PC-9 (cell line): ENCODE measurements at regions of chr7 and their contacts with region 1.

Region 1: GRCh38 chr7:36291387-36292316 is 98.0 kb upstream of the ANLN start:
- DNase-seq: peak; percentile 70 to 80
- H3K4me3 ChIP-seq: no peak overlapping the region
- H3K27ac ChIP-seq: no peak overlapping the region
- H3K4me1 ChIP-seq: peaks cover 56% of the 10 kb centered on the region
- H3K27me3 ChIP-seq: no peaks in the 10 kb centered on the region
- CTCF ChIP-seq: peak; percentile 100

Region 2: DNA sequence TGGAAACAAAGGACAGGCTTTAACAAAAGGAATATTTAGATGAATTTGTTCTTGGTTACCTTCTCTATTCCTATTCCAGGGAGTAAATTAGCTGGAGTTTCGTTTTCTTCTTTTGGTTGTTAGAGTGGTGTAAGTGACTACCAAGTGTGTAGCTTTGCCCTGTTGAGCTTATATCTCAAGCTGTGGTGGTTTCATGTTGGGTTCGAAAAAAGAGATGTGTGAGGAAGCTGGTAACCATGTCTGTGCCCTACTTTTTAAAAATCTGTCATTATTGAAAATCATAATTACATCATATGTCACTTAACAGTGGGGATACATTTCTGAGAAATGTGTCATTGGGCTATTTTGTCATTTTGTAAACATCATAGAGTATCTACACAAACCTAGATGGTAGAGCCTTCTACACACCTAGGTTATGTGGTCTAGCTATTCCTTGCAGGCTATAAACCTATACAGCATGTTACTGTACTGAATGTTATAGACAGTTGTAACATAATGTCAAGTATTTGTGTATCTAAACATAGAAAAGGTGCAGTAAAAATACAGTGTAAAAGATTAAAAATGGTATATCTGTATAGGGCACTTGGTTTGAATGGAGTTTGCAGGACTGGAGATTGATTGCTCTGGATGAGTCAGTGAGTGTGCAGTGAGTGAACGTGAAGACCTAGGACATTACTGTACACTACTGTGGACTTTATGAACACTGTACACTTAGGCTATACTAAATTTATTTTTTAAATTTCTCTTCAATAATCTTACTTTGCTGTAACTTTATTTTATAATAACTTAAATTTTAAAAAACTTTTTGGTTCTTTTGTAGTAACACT is 400.4 kb before region 1 on chr7:
- CTCF ChIA-PET with region 1: no interaction called
- POLR2A ChIA-PET with region 1: interaction called, 16 read pairs
- intact Hi-C with region 1: no loop called
- DNase-seq: no peak
- H3K4me3 ChIP-seq: no peak overlapping the region
- H3K27ac ChIP-seq: no peak overlapping the region
- H3K4me1 ChIP-seq: no peaks in the 10 kb centered on the region
- H3K27me3 ChIP-seq: no peaks in the 10 kb centered on the region
- CTCF ChIP-seq: no peak

Region 3: GRCh38 chr7:36037121-36037662 is 254.5 kb before region 1 on chr7:
- CTCF ChIA-PET with region 1: interaction called, 4 read pairs
- POLR2A ChIA-PET with region 1: no interaction called
- intact Hi-C with region 1: loop called (anchors 1 kb)
- DNase-seq: peak; percentile 94 to 100
- H3K4me3 ChIP-seq: peak overlapping the region; percentile 20; the same call in 1 of the 2 replicates
- H3K27ac ChIP-seq: peak overlapping the region; percentile 87
- H3K4me1 ChIP-seq: peaks cover 75% of the 10 kb centered on the region
- H3K27me3 ChIP-seq: no peaks in the 10 kb centered on the region
- CTCF ChIP-seq: no peak

Region 4: GRCh38 chr7:36128448-36129047 is 163.1 kb before region 1 on chr7:
- CTCF ChIA-PET with region 1: interaction called, 5 read pairs
- POLR2A ChIA-PET with region 1: no interaction called
- intact Hi-C with region 1: loop called (anchors 1 kb)
- DNase-seq: peak; percentile 82 to 95
- H3K4me3 ChIP-seq: peak overlapping the region; percentile 40
- H3K27ac ChIP-seq: peak overlapping the region; percentile 86
- H3K4me1 ChIP-seq: peaks cover 33% of the 10 kb centered on the region
- H3K27me3 ChIP-seq: no peaks in the 10 kb centered on the region
- CTCF ChIP-seq: peak; percentile 100

Region 5: DNA sequence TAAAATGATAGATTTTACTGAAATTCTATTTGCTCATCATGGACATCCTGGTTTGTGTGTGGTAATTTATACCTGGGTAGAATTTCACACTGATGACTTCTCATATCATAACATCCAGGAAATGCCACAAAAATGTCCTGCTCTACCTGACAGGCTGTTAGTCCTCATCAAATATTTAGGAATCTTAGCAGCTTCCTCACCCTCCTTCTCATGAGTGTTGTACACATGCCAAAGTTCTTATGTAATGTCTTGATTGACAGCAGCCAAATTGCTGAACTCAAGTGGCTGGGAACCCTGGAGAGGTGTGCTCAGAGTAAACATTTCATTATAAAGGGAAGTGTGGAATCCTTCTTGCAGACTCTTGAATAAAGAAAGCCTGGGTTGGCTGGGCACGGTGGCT is 129.7 kb before region 1 on chr7:
- CTCF ChIA-PET with region 1: no interaction called
- POLR2A ChIA-PET with region 1: interaction called, 4 read pairs
- intact Hi-C with region 1: loop called (anchors 1 kb)
- DNase-seq: peak; percentile 71 to 100
- H3K4me3 ChIP-seq: no peak overlapping the region
- H3K27ac ChIP-seq: peak overlapping the region; percentile 39
- H3K4me1 ChIP-seq: peaks cover 62% of the 10 kb centered on the region
- H3K27me3 ChIP-seq: no peaks in the 10 kb centered on the region
- CTCF ChIP-seq: no peak

Region 6: DNA sequence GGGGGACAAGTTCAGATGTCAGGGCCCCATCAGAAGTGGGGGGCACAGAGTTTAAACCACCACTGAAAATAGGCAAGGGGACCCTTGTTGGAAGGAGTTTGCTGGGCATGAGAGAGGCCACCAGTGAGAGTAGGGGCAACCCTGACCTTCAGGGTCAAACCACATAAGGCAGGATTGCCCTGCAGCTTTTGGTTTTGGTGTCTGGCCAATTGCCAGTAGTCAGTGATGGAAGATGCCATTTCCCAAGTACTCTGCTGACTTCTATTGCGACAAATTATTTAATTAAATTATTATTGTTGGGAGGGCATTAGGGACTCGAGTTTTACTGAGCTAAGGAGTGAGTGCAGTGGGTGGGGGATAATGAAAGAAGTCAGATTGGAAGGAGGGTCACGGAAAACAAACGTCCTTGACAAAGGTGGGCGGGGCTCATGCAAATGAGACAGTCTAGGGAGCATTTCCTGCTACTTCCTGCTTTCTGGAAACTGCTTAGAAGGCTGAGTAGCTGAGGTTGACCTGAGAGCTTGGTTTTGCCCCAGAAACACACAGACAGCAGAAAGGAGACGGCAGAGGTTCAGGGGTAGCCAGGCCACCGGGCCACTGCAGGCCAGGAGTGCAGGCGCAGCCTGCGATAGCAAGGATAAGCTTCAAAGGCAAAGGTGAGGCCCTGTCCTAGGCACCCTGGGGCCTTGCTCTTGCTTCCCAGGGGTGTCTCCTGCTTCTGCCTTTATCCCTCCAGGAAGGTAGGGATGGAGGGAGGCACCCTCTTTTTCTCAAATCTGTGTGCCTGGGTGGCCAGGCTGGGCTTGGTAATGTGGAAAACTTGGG is 23.9 kb after region 1 on chr7:
- CTCF ChIA-PET with region 1: interaction called, 3 read pairs
- POLR2A ChIA-PET with region 1: no interaction called
- intact Hi-C with region 1: loop called (anchors 1 kb)
- DNase-seq: no peak
- H3K4me3 ChIP-seq: no peak overlapping the region
- H3K27ac ChIP-seq: no peak overlapping the region
- H3K4me1 ChIP-seq: no peaks in the 10 kb centered on the region
- H3K27me3 ChIP-seq: no peaks in the 10 kb centered on the region
- CTCF ChIP-seq: no peak

Region 7: DNA sequence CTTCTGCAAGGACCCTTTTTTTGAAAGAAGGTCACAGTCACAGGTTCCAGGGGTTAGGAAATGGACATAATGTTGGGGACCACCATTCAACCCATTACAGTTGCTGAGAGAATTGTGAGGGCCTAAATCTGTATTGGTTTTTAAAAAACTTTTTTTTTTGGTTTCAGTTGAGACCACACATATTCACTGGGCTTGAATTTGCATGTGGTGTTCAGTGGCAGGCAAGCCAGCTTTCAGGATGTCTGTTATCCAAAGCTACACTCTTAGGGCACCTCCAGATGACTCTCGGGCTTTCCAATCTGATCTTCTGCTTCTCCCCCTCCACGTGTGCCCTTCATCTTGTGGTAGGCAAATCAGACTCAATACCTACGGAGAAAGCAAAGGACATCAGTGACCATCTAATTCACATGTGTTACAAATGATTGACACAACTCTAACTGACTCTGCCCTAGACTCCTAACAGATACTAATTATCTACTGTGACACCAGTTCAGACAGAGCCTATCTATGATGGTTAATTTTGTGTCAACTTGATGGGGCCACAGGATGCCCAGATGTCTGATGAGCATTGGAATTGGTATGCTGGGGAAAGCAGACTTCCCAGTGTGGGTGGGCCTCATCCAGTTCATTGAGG is 1250.3 kb after region 1 on chr7:
- CTCF ChIA-PET with region 1: no interaction called
- POLR2A ChIA-PET with region 1: no interaction called
- intact Hi-C with region 1: no loop called
- DNase-seq: no peak
- H3K4me3 ChIP-seq: no peak overlapping the region
- H3K27ac ChIP-seq: no peak overlapping the region
- H3K4me1 ChIP-seq: no peaks in the 10 kb centered on the region
- H3K27me3 ChIP-seq: no peaks in the 10 kb centered on the region; the same call in 1 of the 2 replicates
- CTCF ChIP-seq: no peak